IMR-90 (cell line): ENCODE measurements at regions of chr6 and their contacts with region 1.

Region 1: DNA sequence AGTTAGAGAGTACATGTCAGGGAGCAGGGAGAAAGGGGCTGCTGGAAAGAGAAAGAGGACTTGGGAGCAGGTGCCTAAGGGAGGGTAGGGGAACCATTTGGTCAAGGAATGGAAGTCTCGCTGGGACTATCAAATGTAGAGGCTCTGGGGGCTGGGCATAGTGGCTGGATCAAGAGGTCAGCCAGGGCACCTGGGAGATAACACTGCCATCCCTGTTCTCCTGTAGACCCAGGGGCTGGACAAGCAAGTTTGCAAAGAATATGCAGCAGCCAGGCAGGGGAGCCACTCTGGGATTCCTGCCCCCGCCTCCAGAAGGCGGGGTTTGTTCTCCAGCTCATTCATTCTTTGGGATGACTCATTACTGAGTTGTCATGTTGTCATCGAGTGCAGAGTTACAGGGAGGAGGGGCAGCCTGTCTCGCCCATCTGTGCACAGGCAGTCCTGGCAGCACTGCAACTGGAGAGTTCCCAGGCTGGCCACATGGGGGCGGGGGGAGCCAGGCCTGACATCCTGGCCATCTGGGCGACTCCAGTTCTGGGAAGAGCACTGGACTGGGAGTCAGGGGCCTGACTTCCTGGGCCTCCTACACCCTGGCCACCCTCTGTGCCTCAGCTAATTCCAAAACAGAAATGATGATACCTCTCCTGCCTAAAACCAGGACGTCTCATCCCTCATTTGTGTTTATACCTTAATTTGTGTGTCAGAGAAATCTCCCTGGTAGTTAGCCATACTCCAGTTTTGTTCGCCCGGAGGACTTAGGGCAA is 28.2 kb upstream of the ZFAND3 start:
- DNase-seq: peak; percentile 98
- ATAC-seq: peak; percentile 97
- H3K4me3 ChIP-seq: no peak overlapping the region
- H3K27ac ChIP-seq: no peak overlapping the region
- H3K4me1 ChIP-seq: peaks cover 9% of the 10 kb centered on the region; the same call in 1 of the 2 replicates
- H3K27me3 ChIP-seq: no peaks in the 10 kb centered on the region
- CTCF ChIP-seq: peak; percentile 96
- POLR2A ChIP-seq: no peak
- RAD21 ChIP-seq: peak; percentile 94

Region 2: GRCh38 chr6:38001386-38001785 is 210.0 kb after region 1 on chr6:
- CTCF ChIA-PET with region 1: interaction called, 10 read pairs
- POLR2A ChIA-PET with region 1: no interaction called
- dilution Hi-C with region 1: no loop called
- in situ Hi-C with region 1: no loop called
- intact Hi-C with region 1: no loop called
- DNase-seq: peak; percentile 28
- ATAC-seq: peak; percentile 59
- H3K4me3 ChIP-seq: no peak overlapping the region
- H3K27ac ChIP-seq: no peak overlapping the region
- H3K4me1 ChIP-seq: no peaks in the 10 kb centered on the region; the same call in 1 of the 2 replicates
- H3K27me3 ChIP-seq: no peaks in the 10 kb centered on the region
- CTCF ChIP-seq: no peak
- POLR2A ChIP-seq: no peak
- RAD21 ChIP-seq: no peak

Region 3: GRCh38 chr6:38012573-38012972 is 221.2 kb after region 1 on chr6:
- CTCF ChIA-PET with region 1: interaction called, 4 read pairs
- POLR2A ChIA-PET with region 1: no interaction called
- dilution Hi-C with region 1: no loop called
- in situ Hi-C with region 1: no loop called
- intact Hi-C with region 1: loop called (anchors 1 kb)
- DNase-seq: peak; percentile 67
- ATAC-seq: peak; percentile 83
- H3K4me3 ChIP-seq: no peak overlapping the region
- H3K27ac ChIP-seq: no peak overlapping the region
- H3K4me1 ChIP-seq: peaks cover 4% of the 10 kb centered on the region; the same call in 1 of the 2 replicates
- H3K27me3 ChIP-seq: no peaks in the 10 kb centered on the region
- CTCF ChIP-seq: peak; percentile 75
- POLR2A ChIP-seq: no peak
- RAD21 ChIP-seq: peak; percentile 88

Region 4: GRCh38 chr6:38110481-38110971 is 319.2 kb after region 1 on chr6:
- CTCF ChIA-PET with region 1: no interaction called
- POLR2A ChIA-PET with region 1: no interaction called
- dilution Hi-C with region 1: no loop called
- in situ Hi-C with region 1: no loop called
- intact Hi-C with region 1: loop called (anchors 10 kb)
- DNase-seq: no peak
- ATAC-seq: no peak
- H3K4me3 ChIP-seq: no peak overlapping the region
- H3K27ac ChIP-seq: no peak overlapping the region
- H3K4me1 ChIP-seq: peaks cover 16% of the 10 kb centered on the region
- H3K27me3 ChIP-seq: no peaks in the 10 kb centered on the region
- CTCF ChIP-seq: no peak
- POLR2A ChIP-seq: no peak
- RAD21 ChIP-seq: no peak